ENCODE measurements at regions of chr2 and their contacts with region 1.

Region 1: GRCh38 chr2:71923887-71924533 is 223.7 kb downstream of the CYP26B1 start:
- DNase-seq: peak; percentile 87
- H3K4me3 Mint-ChIP-seq: no peak overlapping the region
- H3K27ac Mint-ChIP-seq: no peak overlapping the region
- H3K4me1 Mint-ChIP-seq: no peaks in the 10 kb centered on the region
- H3K27me3 Mint-ChIP-seq: no peaks in the 10 kb centered on the region
- CTCF ChIP-seq: peak; percentile 80

Region 2: DNA sequence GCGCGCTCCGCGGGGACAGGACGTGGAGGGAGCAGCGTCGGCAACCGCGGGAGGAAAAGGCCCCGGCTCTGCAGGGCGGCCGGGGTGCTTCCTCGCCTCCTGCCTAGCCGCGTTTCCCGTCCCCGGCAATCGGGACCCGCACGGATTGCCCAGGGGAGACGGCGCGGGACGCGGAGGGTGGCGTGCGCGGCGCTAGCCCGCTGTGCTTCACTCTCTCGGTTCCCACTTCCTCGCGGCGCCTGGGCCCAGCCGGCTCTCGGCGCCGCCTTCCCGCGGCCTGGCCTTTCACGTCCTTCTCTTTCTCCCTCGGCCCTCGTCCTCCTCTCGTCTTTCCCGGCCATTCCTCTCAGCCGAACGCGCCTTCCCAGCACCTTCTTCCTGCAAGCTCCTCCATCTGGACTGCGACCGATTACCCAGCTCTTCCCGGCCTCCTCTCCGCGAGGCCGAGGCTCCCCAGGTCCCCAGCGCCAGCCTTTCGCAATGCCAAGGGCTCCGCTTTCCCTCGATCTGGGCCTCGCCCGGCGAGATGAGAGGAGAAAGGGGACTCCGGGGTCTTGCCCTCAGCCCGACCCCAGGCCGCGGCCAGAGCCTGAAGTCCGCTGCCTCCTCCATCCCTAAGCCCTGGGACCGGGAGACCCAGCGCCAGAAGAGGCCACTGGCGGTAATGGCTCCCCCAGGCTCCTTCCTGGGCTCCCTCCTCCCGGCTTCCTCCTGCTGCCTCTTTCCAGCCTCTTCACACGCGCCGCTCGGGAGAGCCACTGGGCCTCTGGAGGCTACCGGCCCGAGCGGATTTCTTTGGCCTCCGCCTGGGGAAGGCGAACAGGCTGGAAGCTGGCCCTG is 1022.6 kb before region 1 on chr2:
- CTCF ChIA-PET with region 1: no interaction called
- POLR2A ChIA-PET with region 1: no interaction called
- intact Hi-C with region 1: no loop called
- DNase-seq: no peak
- H3K4me3 Mint-ChIP-seq: peak overlapping the region; percentile 74
- H3K27ac Mint-ChIP-seq: no peak overlapping the region
- H3K4me1 Mint-ChIP-seq: peaks cover 6% of the 10 kb centered on the region
- H3K27me3 Mint-ChIP-seq: peaks cover 63% of the 10 kb centered on the region
- CTCF ChIP-seq: no peak

Region 3: DNA sequence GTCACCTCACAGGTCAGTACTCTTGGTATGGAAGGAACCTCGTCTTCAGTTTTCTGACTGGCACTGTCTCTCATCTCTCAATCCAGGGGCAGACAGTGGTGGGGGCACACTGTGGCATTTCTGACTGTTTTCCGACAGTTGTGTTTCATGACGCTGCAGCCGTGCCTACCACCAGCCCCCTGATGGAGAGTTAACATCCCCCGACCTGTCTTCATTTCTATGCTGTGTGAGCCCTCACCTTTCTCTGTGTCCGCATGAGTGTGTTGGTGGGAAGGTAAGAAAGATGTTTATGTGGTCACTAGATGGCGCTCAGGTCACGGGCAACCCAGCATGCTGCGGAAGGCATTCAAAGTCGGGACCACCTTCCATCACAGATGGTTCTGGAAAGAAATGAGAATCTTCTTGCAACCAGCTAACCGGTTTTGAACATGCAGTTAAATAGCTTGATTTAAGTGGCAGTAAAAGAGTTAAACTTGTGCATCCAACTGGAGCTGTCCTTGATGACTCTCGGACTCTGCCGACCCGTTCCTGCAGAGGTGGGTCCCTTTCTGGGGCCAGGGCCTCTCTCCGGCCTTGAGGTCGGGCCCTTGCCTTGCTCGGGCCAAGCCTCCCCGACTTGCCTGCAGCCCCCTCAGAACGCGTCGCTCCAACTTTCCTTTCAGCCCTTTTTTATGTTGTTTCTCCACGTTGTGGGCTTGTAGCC is 378.3 kb before region 1 on chr2:
- CTCF ChIA-PET with region 1: interaction called, 7 read pairs
- POLR2A ChIA-PET with region 1: no interaction called
- intact Hi-C with region 1: loop called (anchors 5 kb)
- DNase-seq: peak; percentile 63
- H3K4me3 Mint-ChIP-seq: no peak overlapping the region
- H3K27ac Mint-ChIP-seq: no peak overlapping the region
- H3K4me1 Mint-ChIP-seq: peaks cover 5% of the 10 kb centered on the region
- H3K27me3 Mint-ChIP-seq: peaks cover 29% of the 10 kb centered on the region
- CTCF ChIP-seq: peak; percentile 83

Region 4: DNA sequence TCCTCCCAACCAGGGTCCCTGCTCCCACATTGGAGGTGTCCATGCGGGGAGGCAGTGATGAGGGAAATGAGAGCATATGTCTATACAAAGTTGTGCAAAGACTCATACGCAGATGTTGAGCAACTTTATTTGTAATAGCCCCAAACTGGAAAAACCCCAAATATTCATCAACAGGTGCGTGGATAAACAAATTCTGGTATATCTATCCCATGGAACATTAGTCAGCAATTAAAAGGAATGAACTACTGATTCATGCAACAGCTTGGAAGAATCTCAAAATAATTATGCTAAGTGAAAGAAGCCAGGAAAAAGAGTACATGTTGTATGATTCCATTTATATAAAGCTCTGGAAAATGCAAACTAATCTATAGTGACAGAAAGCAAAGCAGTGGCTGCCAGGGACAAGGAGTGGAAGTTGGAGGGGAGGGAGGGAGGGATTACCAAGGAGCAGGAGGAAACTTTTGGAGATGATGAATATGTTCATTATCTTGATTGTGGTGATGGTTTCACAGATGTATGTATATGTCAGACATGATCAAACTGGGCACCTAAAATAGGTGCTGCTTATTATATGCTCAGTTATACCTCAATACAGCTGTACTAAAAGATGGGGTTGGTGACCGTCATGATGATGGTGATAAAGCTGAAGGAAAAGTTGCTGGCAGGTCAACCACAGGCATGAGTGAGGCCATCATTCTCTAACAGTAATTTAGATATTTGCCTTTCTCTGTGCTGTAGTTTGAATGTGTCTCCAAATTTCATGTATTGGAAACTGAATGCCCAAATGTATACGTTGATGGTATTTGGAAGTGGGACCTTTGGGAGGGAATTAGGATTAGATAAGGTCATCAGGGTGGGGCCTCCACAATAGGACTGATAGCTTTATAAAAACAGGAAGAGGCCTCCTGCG is 47.2 kb before region 1 on chr2:
- CTCF ChIA-PET with region 1: interaction called, 5 read pairs
- POLR2A ChIA-PET with region 1: no interaction called
- intact Hi-C with region 1: loop called (anchors 1 kb)
- DNase-seq: peak; percentile 39
- H3K4me3 Mint-ChIP-seq: no peak overlapping the region
- H3K27ac Mint-ChIP-seq: no peak overlapping the region
- H3K4me1 Mint-ChIP-seq: peaks cover 13% of the 10 kb centered on the region
- H3K27me3 Mint-ChIP-seq: peaks cover 21% of the 10 kb centered on the region
- CTCF ChIP-seq: no peak

Region 5: GRCh38 chr2:71943238-71944182 is 19.5 kb after region 1 on chr2:
- CTCF ChIA-PET with region 1: interaction called, 13 read pairs
- POLR2A ChIA-PET with region 1: no interaction called
- intact Hi-C with region 1: no loop called
- DNase-seq: no peak
- H3K4me3 Mint-ChIP-seq: no peak overlapping the region
- H3K27ac Mint-ChIP-seq: no peak overlapping the region
- H3K4me1 Mint-ChIP-seq: peaks cover 3% of the 10 kb centered on the region
- H3K27me3 Mint-ChIP-seq: no peaks in the 10 kb centered on the region
- CTCF ChIP-seq: no peak

Region 6: GRCh38 chr2:72027426-72028161 is 103.6 kb after region 1 on chr2:
- CTCF ChIA-PET with region 1: no interaction called
- POLR2A ChIA-PET with region 1: no interaction called
- intact Hi-C with region 1: no loop called
- DNase-seq: peak; percentile 79
- H3K4me3 Mint-ChIP-seq: no peak overlapping the region
- H3K27ac Mint-ChIP-seq: no peak overlapping the region
- H3K4me1 Mint-ChIP-seq: peaks cover 16% of the 10 kb centered on the region
- H3K27me3 Mint-ChIP-seq: no peaks in the 10 kb centered on the region
- CTCF ChIP-seq: no peak

Region 7: DNA sequence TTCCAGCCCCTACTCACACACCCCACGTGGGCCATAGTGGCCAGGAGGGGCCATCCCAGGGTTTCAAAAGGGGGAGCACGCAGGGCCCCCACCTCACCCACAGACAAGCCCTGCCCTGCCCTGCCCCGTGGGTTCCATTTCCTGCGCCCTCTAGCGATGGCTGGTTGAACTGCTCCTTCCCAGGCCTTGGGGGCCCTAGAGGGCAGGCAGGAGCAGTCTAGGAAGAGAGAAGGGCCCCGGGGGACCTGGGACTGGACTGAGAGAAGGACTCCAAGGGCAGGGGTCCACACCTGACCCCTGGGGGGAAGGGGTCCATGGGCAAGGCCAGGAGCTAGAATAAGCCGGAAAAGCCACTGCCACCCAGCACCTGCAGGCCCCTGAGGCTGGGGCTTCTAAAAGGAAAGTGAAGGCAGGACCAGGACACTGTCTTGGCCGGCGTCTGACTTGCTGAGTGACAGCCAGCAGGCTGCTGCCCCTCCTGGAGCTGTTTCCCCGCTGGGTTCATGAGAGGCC is 213.5 kb after region 1 on chr2:
- CTCF ChIA-PET with region 1: interaction called, 25 read pairs
- POLR2A ChIA-PET with region 1: no interaction called
- intact Hi-C with region 1: loop called (anchors 1 kb)
- DNase-seq: peak; percentile 69
- H3K4me3 Mint-ChIP-seq: no peak overlapping the region
- H3K27ac Mint-ChIP-seq: peak overlapping the region; percentile 7
- H3K4me1 Mint-ChIP-seq: peaks cover 6% of the 10 kb centered on the region
- H3K27me3 Mint-ChIP-seq: no peaks in the 10 kb centered on the region
- CTCF ChIP-seq: peak; percentile 96

Region 8: DNA sequence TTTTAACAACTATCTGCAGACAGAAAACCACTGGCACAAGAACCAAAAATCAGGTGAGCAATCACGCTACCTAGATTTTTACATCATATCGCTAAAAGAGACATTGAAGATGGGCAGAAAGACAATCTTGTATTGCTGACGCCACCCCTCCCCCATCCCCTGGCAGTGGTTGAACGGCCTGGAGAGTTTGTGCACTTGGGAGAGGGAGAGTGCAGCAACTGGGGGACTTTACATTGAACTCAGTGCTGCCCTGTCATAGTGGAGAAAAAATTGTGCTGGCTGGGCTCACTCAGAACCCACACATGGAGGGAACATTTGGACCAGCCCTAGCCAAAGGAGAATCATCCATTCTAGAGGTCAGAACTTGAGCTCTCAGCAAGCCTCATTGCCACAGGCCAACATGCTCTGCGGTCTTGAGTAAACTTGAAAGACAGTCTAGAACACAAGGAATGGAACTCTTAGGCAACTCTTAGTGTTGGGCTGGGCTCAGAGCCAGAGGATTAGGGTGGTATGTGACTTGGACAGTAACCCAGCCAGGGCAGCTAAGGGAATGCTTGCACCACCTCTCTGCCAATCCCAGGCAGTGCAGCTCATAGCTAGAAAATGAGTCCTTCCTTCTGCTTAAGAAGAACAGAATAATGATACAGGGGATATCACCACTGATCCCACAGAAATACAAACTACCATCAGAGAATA is 443.7 kb after region 1 on chr2:
- CTCF ChIA-PET with region 1: interaction called, 4 read pairs
- POLR2A ChIA-PET with region 1: no interaction called
- intact Hi-C with region 1: loop called (anchors 10 kb)
- DNase-seq: peak; percentile 100
- H3K4me3 Mint-ChIP-seq: peak overlapping the region; percentile 25
- H3K27ac Mint-ChIP-seq: no peak overlapping the region
- H3K4me1 Mint-ChIP-seq: peaks cover 21% of the 10 kb centered on the region
- H3K27me3 Mint-ChIP-seq: no peaks in the 10 kb centered on the region
- CTCF ChIP-seq: peak; percentile 58

Measured in MCF 10A (cell line).